Right ventricle myocardium superior (tissue), 1 donor: ENCODE measurements at regions of chr3 and their contacts with region 1.

Region 1: DNA sequence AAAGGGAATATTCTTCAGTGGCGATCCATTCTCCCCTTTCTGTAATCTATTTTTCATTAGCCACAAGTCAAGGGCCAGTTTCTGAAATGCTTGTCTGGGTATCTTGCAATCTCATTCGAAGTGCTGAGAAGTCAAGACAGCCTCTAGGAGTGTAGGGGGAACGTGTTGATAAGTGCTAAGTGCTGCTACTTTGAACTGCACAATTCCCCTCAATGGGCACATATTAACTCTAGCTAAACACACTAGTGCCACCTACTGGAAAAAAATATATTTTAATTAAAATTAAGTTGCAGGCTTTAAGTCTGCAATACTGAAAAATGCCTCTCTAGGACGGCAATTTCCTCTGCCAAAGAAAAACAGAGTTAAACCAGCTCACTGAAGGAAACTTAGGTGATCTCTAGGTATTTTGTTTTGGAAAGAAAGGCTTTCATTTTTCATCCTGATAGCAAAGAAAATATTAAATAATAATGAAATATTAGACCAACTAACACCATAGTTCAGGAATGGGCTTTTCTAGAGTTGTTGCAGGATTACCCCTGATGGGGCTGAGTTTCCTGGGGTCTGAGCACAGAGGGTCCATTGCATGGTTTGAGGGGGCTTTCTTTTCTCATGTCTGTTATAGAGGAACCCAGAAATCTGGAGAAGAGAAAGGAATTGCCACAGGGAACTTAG is 181.9 kb upstream of the KBTBD8 start:
- DNase-seq: no peak
- ATAC-seq: peak; percentile 82

Region 2: GRCh38 chr3:66256806-66257205 is 559.4 kb before region 1 on chr3:
- intact Hi-C with region 1: loop called (anchors 5 kb)
- DNase-seq: no peak
- ATAC-seq: no peak

Region 3: GRCh38 chr3:66276705-66277274 is 539.4 kb before region 1 on chr3:
- intact Hi-C with region 1: loop called (anchors 5 kb)
- DNase-seq: no peak
- ATAC-seq: peak; percentile 79

Region 4: DNA sequence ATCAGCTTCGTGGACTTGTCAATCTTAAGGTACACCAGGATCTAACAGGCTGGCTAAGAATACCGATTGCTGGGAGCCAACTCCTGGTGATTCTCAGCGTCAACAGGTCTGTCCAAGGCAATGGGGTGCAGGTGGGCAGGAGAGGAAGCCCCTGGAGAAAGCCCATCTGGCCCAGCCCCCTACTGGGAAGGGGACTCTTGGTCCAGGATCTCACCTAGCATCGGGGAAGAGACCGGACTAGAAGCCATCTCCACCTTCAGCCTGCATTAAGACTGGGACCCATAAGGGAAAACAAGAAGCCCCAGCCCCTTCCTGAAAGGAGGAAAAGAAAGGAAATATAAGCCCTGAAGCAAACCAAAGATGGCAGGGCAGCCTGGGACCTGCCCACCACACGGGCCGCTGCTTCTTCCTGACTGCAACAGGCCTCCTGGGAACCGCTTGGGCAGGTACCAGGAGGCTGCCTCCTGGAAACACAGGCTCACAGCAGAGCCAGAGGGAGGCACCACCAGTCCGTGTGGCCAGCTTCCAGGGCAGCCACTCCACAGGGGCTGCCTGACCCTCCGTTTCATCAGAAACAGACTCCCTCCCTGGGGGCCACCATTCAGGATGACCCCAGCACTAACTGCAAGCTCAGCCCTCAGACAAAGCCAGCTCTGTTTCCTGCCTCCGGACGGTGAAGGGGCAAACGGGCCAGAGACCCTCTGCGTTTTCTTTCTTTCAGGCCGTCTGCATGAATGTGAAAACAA is 415.6 kb before region 1 on chr3:
- intact Hi-C with region 1: loop called (anchors 5 kb)
- DNase-seq: peak; percentile 30
- ATAC-seq: no peak